Right ventricle myocardium inferior (tissue), 1 donor: ENCODE measurements at regions of chr3 and their contacts with region 1.

Region 1: GRCh38 chr3:179322286-179323196 is at the start of gene ZNF639:
- DNase-seq: peak; percentile 89
- ATAC-seq: peak; percentile 91
- total RNA-seq, gene ZNF639: 31.2 TPM

Region 2: DNA sequence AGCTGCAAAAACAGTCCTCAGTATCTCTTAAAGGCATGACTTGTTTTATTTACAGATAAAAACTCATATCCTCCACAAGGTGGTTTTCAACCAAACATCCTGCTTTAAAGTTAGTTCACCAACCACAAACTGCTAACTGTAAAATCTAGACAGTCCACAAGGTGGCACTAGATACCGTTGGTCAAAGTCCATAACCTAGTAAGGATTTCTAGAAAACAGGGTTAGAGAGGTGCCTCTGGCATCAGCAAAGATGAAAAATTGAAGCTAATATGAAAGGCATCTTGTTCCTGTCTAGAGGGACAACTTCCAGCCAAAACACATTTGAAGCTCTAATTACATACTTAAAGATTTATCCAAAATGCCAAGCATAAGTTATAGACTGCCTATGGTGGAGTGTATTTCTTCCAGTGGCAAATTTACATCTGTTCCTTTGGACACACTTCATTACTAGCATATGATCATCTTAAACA is 307.0 kb before region 1 on chr3:
- intact Hi-C with region 1: loop called (anchors 2 kb)
- DNase-seq: no peak
- ATAC-seq: no peak

Region 3: GRCh38 chr3:179105881-179106280 is 216.7 kb before region 1 on chr3:
- intact Hi-C with region 1: loop called (anchors 2 kb)
- DNase-seq: no peak
- ATAC-seq: no peak

Region 4: DNA sequence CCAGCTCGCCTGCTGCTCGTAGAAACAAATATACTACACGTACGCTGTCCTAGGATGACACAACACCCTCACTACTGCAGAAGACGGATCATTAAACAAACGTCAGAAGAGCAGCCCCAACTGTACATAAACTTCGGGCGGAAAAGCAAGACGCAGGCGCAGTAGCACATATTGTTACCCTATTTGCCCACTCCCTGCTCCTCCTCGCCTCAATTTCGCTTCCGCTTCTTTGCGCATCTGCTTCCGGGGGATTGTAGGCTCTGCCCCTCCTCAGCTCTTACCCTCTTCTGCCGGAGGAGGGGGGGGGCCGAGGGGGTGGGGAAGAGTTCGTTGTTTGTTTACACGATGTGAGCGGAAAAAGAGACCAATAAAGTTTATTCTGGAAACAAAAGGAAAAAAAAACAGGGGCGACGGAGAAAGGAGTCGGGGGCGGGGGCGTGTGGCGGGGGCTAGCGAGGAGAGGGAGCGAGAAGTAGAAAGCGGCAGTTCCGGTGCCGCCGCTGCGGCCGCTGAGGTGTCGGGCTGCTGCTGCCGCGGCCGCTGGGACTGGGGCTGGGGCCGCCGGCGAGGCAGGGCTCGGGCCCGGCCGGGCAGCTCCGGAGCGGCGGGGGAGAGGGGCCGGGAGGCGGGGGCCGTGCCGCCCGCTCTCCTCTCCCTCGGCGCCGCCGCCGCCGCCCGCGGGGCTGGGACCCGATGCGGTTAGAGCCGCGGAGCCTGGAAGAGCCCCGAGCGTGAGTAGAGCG is 174.5 kb before region 1 on chr3 and contains the start of gene PIK3CA:
- intact Hi-C with region 1: loop called (anchors 1 kb)
- DNase-seq: peak; percentile 95
- ATAC-seq: peak; percentile 98
- total RNA-seq, gene PIK3CA: 21.1 TPM

Region 5: GRCh38 chr3:179260949-179261765 is 61.4 kb before region 1 on chr3:
- intact Hi-C with region 1: loop called (anchors 5 kb)
- DNase-seq: peak; percentile 91
- ATAC-seq: peak; percentile 99

Region 6: DNA sequence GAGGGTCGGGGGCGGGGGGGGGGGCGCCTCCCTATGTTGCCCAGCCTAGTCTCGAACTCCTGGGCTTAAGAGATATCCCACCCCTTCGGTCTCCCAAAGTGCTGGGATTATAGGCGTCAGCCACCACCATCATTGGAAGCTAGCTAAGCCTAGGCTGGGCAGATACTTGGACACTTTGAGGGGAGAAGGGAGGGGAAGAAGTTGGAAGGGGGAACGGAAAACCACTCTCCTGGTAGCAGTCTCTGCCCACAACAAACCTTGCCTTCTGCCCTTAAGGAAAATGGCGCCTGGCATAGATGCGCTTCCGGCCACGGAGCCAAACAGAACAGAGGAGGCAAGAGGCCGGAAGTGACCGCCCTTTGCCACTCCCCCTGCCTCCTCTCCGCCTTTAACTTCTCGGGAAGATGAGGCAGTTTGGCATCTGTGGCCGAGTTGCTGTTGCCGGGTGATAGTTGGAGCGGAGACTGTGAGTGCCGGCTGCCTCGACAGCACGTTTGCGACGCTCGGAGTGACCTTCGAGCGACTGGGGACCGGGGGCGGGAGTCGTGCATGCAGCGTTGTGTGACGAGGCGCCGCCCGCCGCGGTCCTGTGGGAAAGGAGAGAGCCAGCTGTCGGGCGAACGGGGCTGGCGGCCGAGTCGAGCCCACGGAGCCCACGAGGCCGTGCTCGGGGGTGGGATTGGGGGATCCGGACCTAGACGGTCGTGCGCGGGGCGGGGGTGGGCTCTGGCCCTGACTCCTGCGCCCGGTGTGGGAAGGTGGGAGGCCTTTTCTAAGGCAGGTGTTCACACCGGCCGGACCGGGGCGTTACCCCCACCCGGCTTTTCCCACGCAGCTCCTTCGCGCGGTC is 25.0 kb after region 1 on chr3 and contains the start of gene MFN1:
- intact Hi-C with region 1: loop called (anchors 1 kb)
- DNase-seq: peak; percentile 97
- ATAC-seq: peak; percentile 99
- total RNA-seq, gene MFN1: 64.5 TPM

Region 7: GRCh38 chr3:179562591-179563270 is 240.2 kb after region 1 on chr3 and contains the start of gene ACTL6A:
- intact Hi-C with region 1: loop called (anchors 1 kb)
- DNase-seq: peak; percentile 100
- ATAC-seq: peak; percentile 99
- total RNA-seq, gene ACTL6A: 19.1 TPM